MCF 10A (cell line): ENCODE measurements at regions of chr3 and their contacts with region 1.

Region 1: GRCh38 chr3:49093853-49094767 is at the start of gene QRICH1:
- DNase-seq: peak; percentile 99
- H3K4me3 Mint-ChIP-seq: peak within 1 kb of the TSS; percentile 89
- H3K27ac Mint-ChIP-seq: peak within 1 kb of the TSS; percentile 98
- H3K4me1 Mint-ChIP-seq: peaks cover 6% of the 10 kb centered on the region
- H3K27me3 Mint-ChIP-seq: no peaks in the 10 kb centered on the region
- CTCF ChIP-seq: peak; percentile 21
- total RNA-seq, gene QRICH1: 96.1 and 97.2 TPM in 2 replicates

Region 2: DNA sequence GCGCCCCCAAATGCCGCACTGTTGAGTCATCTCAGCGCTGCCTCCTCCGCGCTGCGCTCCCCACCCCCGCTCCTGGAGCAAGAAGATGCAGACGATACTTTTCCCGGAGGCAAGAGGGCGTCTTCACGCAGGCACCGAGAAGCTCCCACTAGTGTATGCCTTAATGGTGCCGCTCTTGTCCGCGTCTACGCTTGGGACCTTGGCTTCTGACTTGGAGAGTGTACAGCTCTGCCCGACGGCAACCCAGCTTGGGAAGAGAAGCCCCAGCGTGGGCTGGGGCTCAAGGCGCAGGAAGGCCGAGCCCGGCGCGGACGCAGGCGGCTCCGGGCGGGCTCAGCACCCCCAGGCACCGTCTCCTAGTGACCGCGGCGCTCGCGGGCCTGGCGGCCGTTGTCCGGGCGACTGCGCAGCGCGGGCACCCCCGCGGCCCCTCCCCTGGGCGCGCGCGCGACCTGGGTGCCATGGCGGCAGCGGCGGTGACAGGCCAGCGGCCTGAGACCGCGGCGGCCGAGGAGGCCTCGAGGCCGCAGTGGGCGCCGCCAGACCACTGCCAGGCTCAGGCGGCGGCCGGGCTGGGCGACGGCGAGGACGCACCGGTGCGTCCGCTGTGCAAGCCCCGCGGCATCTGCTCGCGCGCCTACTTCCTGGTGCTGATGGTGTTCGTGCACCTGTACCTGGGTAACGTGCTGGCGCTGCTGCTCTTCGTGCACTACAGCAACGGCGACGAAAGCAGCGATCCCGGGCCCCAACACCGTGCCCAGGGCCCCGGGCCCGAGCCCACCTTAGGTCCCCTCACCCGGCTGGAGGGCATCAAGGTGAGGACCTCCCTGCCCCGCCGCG is 104.1 kb before region 1 on chr3 and contains the start of gene P4HTM:
- CTCF ChIA-PET with region 1: interaction called, 3 read pairs
- POLR2A ChIA-PET with region 1: interaction called, 26 read pairs
- intact Hi-C with region 1: no loop called
- DNase-seq: peak; percentile 82
- H3K4me3 Mint-ChIP-seq: peak within 1 kb of the TSS; percentile 89
- H3K27ac Mint-ChIP-seq: peak within 1 kb of the TSS; percentile 71
- H3K4me1 Mint-ChIP-seq: peaks cover 29% of the 10 kb centered on the region
- H3K27me3 Mint-ChIP-seq: no peaks in the 10 kb centered on the region
- CTCF ChIP-seq: peak; percentile 13
- total RNA-seq, gene P4HTM: 18.8 and 26.1 TPM in 2 replicates

Region 3: GRCh38 chr3:49028673-49029562 is 65.2 kb before region 1 on chr3 and contains the start of gene IMPDH2:
- CTCF ChIA-PET with region 1: interaction called, 3 read pairs
- POLR2A ChIA-PET with region 1: interaction called, 128 read pairs
- intact Hi-C with region 1: loop called (anchors 5 kb)
- DNase-seq: peak; percentile 90
- H3K4me3 Mint-ChIP-seq: peak within 1 kb of the TSS; percentile 95
- H3K27ac Mint-ChIP-seq: peak within 1 kb of the TSS; percentile 99
- H3K4me1 Mint-ChIP-seq: peaks cover 40% of the 10 kb centered on the region
- H3K27me3 Mint-ChIP-seq: no peaks in the 10 kb centered on the region
- CTCF ChIP-seq: no peak
- total RNA-seq, gene IMPDH2: 317 and 476 TPM in 2 replicates

Region 4: GRCh38 chr3:49120438-49121131 is 26.5 kb after region 1 on chr3 and contains the start of gene USP19:
- CTCF ChIA-PET with region 1: interaction called, 5 read pairs
- POLR2A ChIA-PET with region 1: interaction called, 70 read pairs
- intact Hi-C with region 1: no loop called
- DNase-seq: peak; percentile 92
- H3K4me3 Mint-ChIP-seq: peak within 1 kb of the TSS; percentile 75
- H3K27ac Mint-ChIP-seq: peak within 1 kb of the TSS; percentile 79
- H3K4me1 Mint-ChIP-seq: peaks cover 6% of the 10 kb centered on the region
- H3K27me3 Mint-ChIP-seq: no peaks in the 10 kb centered on the region
- CTCF ChIP-seq: no peak
- total RNA-seq, gene USP19: 39.3 and 51.4 TPM in 2 replicates

Region 5: GRCh38 chr3:49339945-49340800 is 246.1 kb after region 1 on chr3 and contains the start of gene USP4:
- CTCF ChIA-PET with region 1: interaction called, 5 read pairs
- POLR2A ChIA-PET with region 1: interaction called, 22 read pairs
- intact Hi-C with region 1: no loop called
- DNase-seq: peak; percentile 89
- H3K4me3 Mint-ChIP-seq: peak within 1 kb of the TSS; percentile 96
- H3K27ac Mint-ChIP-seq: peak within 1 kb of the TSS; percentile 87
- H3K4me1 Mint-ChIP-seq: peaks cover 19% of the 10 kb centered on the region
- H3K27me3 Mint-ChIP-seq: no peaks in the 10 kb centered on the region
- CTCF ChIP-seq: peak; percentile 26
- total RNA-seq, gene USP4: 52.6 and 54.1 TPM in 2 replicates

Region 6: GRCh38 chr3:49469936-49470713 is 376.0 kb after region 1 on chr3 and contains the start of gene DAG1:
- CTCF ChIA-PET with region 1: interaction called, 3 read pairs
- POLR2A ChIA-PET with region 1: interaction called, 17 read pairs
- intact Hi-C with region 1: no loop called
- DNase-seq: peak; percentile 96
- H3K4me3 Mint-ChIP-seq: peak within 1 kb of the TSS; percentile 89
- H3K27ac Mint-ChIP-seq: peak within 1 kb of the TSS; percentile 88
- H3K4me1 Mint-ChIP-seq: peaks cover 19% of the 10 kb centered on the region
- H3K27me3 Mint-ChIP-seq: no peaks in the 10 kb centered on the region
- CTCF ChIP-seq: no peak
- total RNA-seq, gene DAG1: 40.3 and 49.9 TPM in 2 replicates